Head of caudate nucleus (tissue), 42 donors: ENCODE measurements at regions of chr17 and their contacts with region 1.

Region 1: GRCh38 chr17:7989781-7990655 is 12.4 kb upstream of the GUCY2D start:
- DNase-seq: peak; percentile 74 to 96 (median 90)

Region 2: DNA sequence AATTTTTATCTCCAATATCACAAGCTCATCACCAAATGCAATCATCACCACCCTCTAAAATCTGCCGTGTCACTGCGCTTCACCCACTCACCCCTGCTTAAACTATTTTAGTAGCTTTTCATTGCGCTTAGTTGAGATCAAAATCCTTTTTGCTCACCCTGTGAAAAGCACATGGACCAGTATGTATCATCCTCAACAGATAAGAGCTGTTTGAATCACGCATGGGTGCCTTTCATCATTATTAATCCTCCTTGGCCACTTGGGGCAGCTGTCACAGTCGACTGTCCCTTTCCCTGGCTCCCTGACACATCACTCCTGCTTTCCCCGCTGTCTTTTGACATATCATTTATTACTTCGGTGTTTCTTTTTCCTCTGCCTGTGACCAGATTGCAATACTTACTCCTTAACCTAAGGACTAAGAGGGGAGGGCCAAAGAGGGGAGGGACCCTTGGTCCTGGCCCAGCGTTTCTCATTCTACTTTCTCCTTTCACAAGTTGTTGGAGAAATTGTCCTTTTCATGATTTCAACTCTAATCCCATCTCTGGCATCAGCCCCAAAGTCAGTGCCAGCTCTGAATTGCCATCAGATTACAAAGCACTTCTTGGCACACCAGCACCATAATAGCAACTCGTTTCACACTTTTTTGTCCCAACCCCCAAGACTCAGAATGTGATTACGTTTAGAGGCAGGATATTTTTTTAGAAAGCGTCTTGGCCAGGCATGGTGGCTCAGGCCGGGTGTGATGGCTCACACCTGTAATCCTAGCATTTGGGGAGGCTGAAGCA is 164.6 kb before region 1 on chr17:
- intact Hi-C with region 1: no loop called
- DNase-seq: peak in 31 of 42 donors; percentile 10 to 81 (median 52)

Region 3: DNA sequence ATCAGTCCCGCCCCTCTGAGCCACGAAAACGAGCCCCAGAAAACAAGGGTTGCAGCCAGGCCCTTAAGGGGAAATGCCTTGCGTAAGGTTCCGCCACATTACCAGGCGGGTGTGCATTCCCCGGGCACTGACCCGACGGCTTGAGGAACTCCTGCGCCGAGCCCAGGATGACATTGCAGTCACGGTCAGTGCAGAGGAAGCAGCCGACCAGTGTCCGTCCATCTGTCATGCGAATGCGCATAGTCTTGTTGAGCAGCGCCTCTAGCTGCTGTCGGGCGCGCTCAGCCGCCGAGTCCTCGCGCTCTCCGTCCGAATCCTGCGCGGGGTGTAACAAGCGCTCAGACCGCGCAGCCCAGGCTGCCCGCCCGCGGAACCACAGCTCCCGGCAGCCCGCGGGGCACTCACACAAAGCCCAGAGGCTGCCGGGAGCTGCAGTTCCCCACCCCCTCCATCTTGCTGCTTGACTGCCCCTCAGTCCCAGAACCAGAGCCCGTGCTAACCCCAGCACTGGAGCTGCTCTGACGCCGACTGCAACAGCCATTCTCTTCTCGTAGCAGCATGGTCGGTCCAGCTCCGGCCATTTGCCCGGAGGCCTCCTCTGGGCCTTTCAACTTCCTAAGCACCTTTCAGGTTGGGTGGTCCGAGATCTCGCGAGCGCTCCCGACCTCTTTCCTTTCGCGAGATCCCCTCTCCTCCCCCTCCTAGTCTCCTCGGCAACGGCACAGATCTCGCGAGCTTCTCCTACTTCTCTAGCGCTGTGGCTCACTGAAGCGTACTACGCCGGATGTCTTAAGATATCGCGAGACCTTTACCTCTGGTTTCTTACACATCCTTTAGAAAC is 132.9 kb before region 1 on chr17 and contains the start of gene NAA38:
- intact Hi-C with region 1: loop called (anchors 5 kb)
- DNase-seq: peak; percentile 90 to 99 (median 97)

Region 4: GRCh38 chr17:7951143-7951803 is 38.7 kb before region 1 on chr17:
- intact Hi-C with region 1: no loop called
- DNase-seq: no peak

Region 5: GRCh38 chr17:8041249-8041928 is 51.4 kb after region 1 on chr17:
- intact Hi-C with region 1: loop called (anchors 10 kb)
- DNase-seq: peak in 27 of 42 donors; percentile 15 to 69 (median 40)